ENCODE measurements at regions of chr6 and their contacts with region 1.

Region 1: DNA sequence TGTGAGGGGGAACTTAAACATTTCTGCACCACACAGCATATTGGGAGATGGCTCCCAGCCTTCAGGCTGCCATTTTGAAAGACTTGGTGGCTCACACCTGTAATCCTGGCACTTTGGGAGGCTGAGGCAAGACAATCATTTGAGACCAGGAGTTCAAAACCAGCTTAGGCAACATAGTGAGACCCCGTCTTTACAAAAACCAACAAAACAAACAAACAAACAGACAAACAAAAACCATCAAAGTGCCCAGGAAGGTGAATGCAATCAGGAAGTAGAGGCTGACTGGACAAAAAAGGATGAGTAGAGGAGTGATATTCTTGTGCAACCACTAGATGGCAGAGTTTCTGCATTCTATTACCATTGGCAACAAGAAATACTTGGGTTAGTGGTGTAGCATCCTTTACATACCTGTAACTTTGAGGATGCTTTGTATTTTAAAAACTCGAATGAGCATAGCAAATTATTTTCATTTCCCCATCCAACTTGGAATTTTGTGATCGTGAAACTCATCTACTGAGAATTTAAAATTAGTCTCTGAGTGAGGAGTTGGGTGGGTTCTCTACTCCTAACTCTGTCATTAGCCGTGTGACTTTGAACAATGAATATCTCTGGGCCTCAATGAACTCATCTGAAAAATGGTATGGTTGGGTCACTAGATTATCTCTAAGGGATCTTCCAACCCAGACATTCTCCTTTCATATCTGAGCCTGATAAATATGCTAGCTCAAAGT is 84.4 kb downstream of the CRYBG1 start:
- DNase-seq: peak in 7 of 9 donors; percentile 55 to 81 (median 70)
- ATAC-seq: peak; percentile 81
- H3K4me3 ChIP-seq: no peak overlapping the region
- H3K4me3 Mint-ChIP-seq: no peak overlapping the region
- H3K27ac ChIP-seq: no peak overlapping the region
- H3K27ac Mint-ChIP-seq: peak overlapping the region in 1 of 9 donors; percentile 43
- H3K4me1 ChIP-seq: peaks cover 0 to 5% of the 10 kb centered on the region in 2 donors
- H3K4me1 Mint-ChIP-seq: peaks cover 5 to 16% (median 14%) of the 10 kb centered on the region in 7 donors
- H3K27me3 ChIP-seq: peaks cover 0 to 4% of the 10 kb centered on the region in 2 donors
- H3K27me3 Mint-ChIP-seq: peaks cover 19 to 36% (median 27%) of the 10 kb centered on the region in 5 donors

Region 2: GRCh38 chr6:105484238-105485161 is 960.4 kb before region 1 on chr6:
- CTCF ChIA-PET with region 1: no interaction called
- POLR2A ChIA-PET with region 1: no interaction called
- intact Hi-C with region 1: loop called (anchors 1 to 2 kb)
- DNase-seq: peak in 5 of 9 donors; percentile 7 to 36 (median 20)
- ATAC-seq: peak; percentile 59
- H3K4me3 ChIP-seq: no peak overlapping the region
- H3K4me3 Mint-ChIP-seq: no peak overlapping the region
- H3K27ac ChIP-seq: no peak overlapping the region
- H3K27ac Mint-ChIP-seq: peak overlapping the region in 2 of 9 donors; percentile 20 to 52
- H3K4me1 ChIP-seq: peaks cover 0 to 35% of the 10 kb centered on the region in 2 donors
- H3K4me1 Mint-ChIP-seq: peaks cover 0 to 63% (median 0%) of the 10 kb centered on the region in 7 donors
- H3K27me3 ChIP-seq: no peaks in the 10 kb centered on the region
- H3K27me3 Mint-ChIP-seq: peaks cover 11 to 16% (median 13%) of the 10 kb centered on the region in 5 donors

Region 3: DNA sequence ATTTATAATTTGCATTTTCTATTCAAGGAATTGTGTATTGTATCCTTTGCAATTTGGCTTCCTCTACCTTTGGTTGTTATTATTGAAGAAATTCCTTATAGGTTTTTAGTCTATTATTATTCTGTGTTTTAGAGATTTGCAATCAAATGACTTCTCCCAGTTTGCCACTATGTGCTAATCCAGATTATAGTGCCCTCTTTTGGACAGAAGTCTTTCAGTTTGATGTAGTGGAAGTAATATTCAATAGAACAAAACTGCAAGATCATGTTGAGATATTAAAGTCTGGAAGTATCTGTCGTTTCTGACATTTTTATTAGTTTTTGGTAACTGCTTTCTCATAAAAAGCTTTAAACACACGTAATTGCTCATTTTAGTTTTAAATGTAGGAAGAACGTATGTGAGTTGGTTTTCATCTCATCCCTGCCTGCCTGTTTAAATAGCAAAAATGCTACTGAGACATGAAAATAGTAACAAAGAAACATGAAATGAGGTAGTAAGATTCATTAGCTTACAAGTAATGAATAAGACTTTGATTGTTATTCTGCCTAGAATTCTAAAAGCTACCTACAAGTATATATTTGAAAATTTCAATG is 111.5 kb after region 1 on chr6:
- CTCF ChIA-PET with region 1: interaction called, 325 read pairs
- POLR2A ChIA-PET with region 1: no interaction called
- intact Hi-C with region 1: loop called (anchors 1 kb)
- DNase-seq: peak in 6 of 9 donors; percentile 25 to 61 (median 49)
- ATAC-seq: peak; percentile 64
- H3K4me3 ChIP-seq: no peak overlapping the region
- H3K4me3 Mint-ChIP-seq: no peak overlapping the region
- H3K27ac ChIP-seq: no peak overlapping the region
- H3K27ac Mint-ChIP-seq: peak overlapping the region in 4 of 9 donors; percentile 1 to 56 (median 33)
- H3K4me1 ChIP-seq: no peaks in the 10 kb centered on the region
- H3K4me1 Mint-ChIP-seq: peaks cover 0 to 21% (median 6%) of the 10 kb centered on the region in 7 donors
- H3K27me3 ChIP-seq: no peaks in the 10 kb centered on the region
- H3K27me3 Mint-ChIP-seq: no peaks in the 10 kb centered on the region

Region 4: GRCh38 chr6:106979427-106979884 is 534.5 kb after region 1 on chr6:
- CTCF ChIA-PET with region 1: interaction called, 21 read pairs
- POLR2A ChIA-PET with region 1: no interaction called
- intact Hi-C with region 1: loop called (anchors 1 kb)
- DNase-seq: peak; percentile 40 to 78 (median 62)
- ATAC-seq: peak; percentile 87
- H3K4me3 ChIP-seq: no peak overlapping the region
- H3K4me3 Mint-ChIP-seq: no peak overlapping the region
- H3K27ac ChIP-seq: no peak overlapping the region
- H3K27ac Mint-ChIP-seq: no peak overlapping the region
- H3K4me1 ChIP-seq: no peaks in the 10 kb centered on the region
- H3K4me1 Mint-ChIP-seq: peaks cover 0 to 7% (median 3%) of the 10 kb centered on the region in 7 donors
- H3K27me3 ChIP-seq: peaks cover 0 to 3% of the 10 kb centered on the region in 2 donors
- H3K27me3 Mint-ChIP-seq: peaks cover 28 to 56% (median 41%) of the 10 kb centered on the region in 5 donors